ENCODE measurements at regions of chr1 and their contacts with region 1.

Region 1: GRCh38 chr1:151340870-151341754 is 5.9 kb downstream of the RFX5 start:
- DNase-seq: peak in 8 of 9 donors; percentile 46 to 75 (median 68)
- ATAC-seq: peak; percentile 92
- H3K4me3 ChIP-seq: no peak overlapping the region
- H3K4me3 Mint-ChIP-seq: peak overlapping the region in 1 of 10 donors; percentile 22
- H3K27ac ChIP-seq: peak overlapping the region; percentile 5
- H3K27ac Mint-ChIP-seq: peak overlapping the region; percentile 1 to 70 (median 52)
- H3K4me1 ChIP-seq: peaks cover 6 to 7% of the 10 kb centered on the region in 2 donors
- H3K4me1 Mint-ChIP-seq: peaks cover 20 to 39% (median 28%) of the 10 kb centered on the region in 7 donors
- H3K27me3 ChIP-seq: no peaks in the 10 kb centered on the region
- H3K27me3 Mint-ChIP-seq: no peaks in the 10 kb centered on the region

Region 2: GRCh38 chr1:151098126-151098525 is 243.0 kb before region 1 on chr1:
- CTCF ChIA-PET with region 1: interaction called, 15 read pairs
- POLR2A ChIA-PET with region 1: interaction called, 3 read pairs
- intact Hi-C with region 1: loop called in 1 of 2 experiments (anchors 1 kb)
- DNase-seq: no peak
- ATAC-seq: no peak
- H3K4me3 ChIP-seq: no peak overlapping the region
- H3K4me3 Mint-ChIP-seq: no peak overlapping the region
- H3K27ac ChIP-seq: no peak overlapping the region
- H3K27ac Mint-ChIP-seq: peak overlapping the region in 1 of 9 donors; percentile 25
- H3K4me1 ChIP-seq: no peaks in the 10 kb centered on the region
- H3K4me1 Mint-ChIP-seq: peaks cover 0 to 3% (median 0%) of the 10 kb centered on the region in 7 donors
- H3K27me3 ChIP-seq: no peaks in the 10 kb centered on the region
- H3K27me3 Mint-ChIP-seq: peaks cover 0 to 7% (median 0%) of the 10 kb centered on the region in 5 donors

Region 3: GRCh38 chr1:151294742-151295462 is 46.2 kb before region 1 on chr1:
- CTCF ChIA-PET with region 1: interaction called, 119 read pairs
- POLR2A ChIA-PET with region 1: interaction called, 9 read pairs
- intact Hi-C with region 1: no loop called
- DNase-seq: no peak
- ATAC-seq: no peak
- H3K4me3 ChIP-seq: no peak overlapping the region
- H3K4me3 Mint-ChIP-seq: no peak overlapping the region
- H3K27ac ChIP-seq: no peak overlapping the region
- H3K27ac Mint-ChIP-seq: peak overlapping the region in 2 of 9 donors; percentile 32 to 52
- H3K4me1 ChIP-seq: no peaks in the 10 kb centered on the region
- H3K4me1 Mint-ChIP-seq: peaks cover 0 to 14% (median 3%) of the 10 kb centered on the region in 7 donors
- H3K27me3 ChIP-seq: no peaks in the 10 kb centered on the region
- H3K27me3 Mint-ChIP-seq: no peaks in the 10 kb centered on the region